ENCODE measurements at regions of chr17 and their contacts with region 1.

Region 1: GRCh38 chr17:39927929-39928857 is 661 bp downstream of the LRRC3C start:
- DNase-seq: peak; percentile 87 to 90
- H3K4me3 ChIP-seq: peak overlapping the region; percentile 2 to 98 (median 29)
- H3K27ac ChIP-seq: peak overlapping the region; percentile 94 to 95 (median 95)
- H3K4me1 ChIP-seq: peaks cover 27 to 48% of the 10 kb centered on the region in 2 donors
- H3K27me3 ChIP-seq: no peaks in the 10 kb centered on the region
- CTCF ChIP-seq: peak in 1 of 6 experiments; percentile 31
- POLR2A ChIP-seq: peak in 1 of 2 donors; percentile 10

Region 2: DNA sequence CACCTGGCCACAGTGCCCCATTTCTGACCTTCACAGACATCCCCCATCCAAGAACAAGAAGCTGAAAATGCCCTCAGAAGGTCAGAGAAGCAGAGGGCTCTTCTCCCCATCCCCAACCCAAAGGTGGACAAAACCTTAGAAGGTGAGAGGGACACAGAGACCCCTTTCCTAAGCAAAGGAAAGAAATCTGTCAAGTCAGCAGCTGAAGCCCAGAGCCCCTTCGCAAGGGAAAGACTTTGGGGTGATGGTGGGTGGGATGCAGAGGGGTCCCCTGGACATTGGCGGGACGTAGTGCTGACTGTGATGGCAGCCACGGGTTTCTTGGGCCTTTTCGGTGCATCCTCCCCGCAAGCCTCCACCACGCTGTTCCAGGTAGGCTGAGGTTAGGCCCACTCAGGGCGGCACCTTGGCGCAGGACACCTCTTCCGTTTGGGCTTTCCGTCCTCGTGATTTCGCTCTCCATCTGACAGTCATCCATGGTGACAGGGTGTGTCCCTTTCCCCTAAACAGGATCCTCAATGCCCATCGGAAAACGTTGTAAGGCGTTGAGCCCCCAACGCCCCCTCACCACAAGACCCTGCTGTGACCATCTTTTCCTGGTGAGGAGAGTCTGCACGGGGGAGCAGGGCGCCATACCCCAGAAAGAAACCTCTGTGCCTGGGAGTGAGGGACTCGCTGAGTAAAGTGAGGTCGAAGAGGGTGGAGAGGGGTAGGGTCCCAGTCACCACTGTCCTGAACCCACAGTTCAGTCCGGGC is 23.9 kb after region 1 on chr17:
- intact Hi-C with region 1: loop called (anchors 2 kb)
- DNase-seq: peak in 1 of 2 donors; percentile 23
- H3K4me3 ChIP-seq: peak overlapping the region in 1 of 3 donors; percentile 32
- H3K27ac ChIP-seq: no peak overlapping the region
- H3K4me1 ChIP-seq: peaks cover 4 to 9% of the 10 kb centered on the region in 2 donors
- H3K27me3 ChIP-seq: no peaks in the 10 kb centered on the region
- CTCF ChIP-seq: no peak
- POLR2A ChIP-seq: no peak

Measured in thyroid gland (tissue), 4 donors.